ENCODE measurements at regions of chr2 and their contacts with region 1.

Region 1: DNA sequence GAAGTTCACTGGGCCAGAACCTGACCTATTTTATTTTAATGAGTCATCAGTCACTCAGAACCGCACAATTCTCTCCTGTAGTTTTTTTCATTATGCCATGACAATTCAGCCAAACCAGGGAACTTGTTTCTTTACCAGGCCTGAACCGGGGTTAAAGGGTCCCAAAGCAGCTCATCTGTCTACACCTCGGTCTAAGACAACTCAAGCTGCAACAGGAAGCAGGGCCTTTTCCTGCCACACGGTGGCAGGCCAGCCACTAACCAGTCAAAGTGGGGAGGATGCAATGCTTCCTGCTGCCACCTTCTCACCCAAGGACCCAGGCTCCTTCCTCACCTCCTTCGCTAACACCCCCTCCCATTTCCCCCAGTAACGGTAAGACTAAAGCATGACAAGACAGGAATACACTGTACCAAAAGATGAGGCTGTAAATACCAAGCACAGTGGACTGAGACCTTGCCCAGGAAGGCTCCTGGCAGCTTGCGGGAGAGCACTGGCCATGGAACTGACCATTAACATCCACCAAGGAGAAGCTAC is 56.7 kb upstream of the ACKR3 start:
- DNase-seq: peak in 1 of 2 donors; percentile 84
- H3K4me3 ChIP-seq: no peak overlapping the region
- H3K27ac ChIP-seq: no peak overlapping the region
- H3K4me1 ChIP-seq: no peaks in the 10 kb centered on the region
- H3K27me3 ChIP-seq: no peaks in the 10 kb centered on the region
- CTCF ChIP-seq: peak; percentile 71 to 85 (median 76)

Region 2: GRCh38 chr2:236631281-236631855 is 118.4 kb after region 1 on chr2:
- intact Hi-C with region 1: loop called (anchors 10 kb)
- DNase-seq: peak in 1 of 2 donors; percentile 60
- H3K4me3 ChIP-seq: no peak overlapping the region
- H3K27ac ChIP-seq: no peak overlapping the region
- H3K4me1 ChIP-seq: peaks cover 0 to 5% of the 10 kb centered on the region in 2 donors
- H3K27me3 ChIP-seq: no peaks in the 10 kb centered on the region
- CTCF ChIP-seq: no peak

Region 3: DNA sequence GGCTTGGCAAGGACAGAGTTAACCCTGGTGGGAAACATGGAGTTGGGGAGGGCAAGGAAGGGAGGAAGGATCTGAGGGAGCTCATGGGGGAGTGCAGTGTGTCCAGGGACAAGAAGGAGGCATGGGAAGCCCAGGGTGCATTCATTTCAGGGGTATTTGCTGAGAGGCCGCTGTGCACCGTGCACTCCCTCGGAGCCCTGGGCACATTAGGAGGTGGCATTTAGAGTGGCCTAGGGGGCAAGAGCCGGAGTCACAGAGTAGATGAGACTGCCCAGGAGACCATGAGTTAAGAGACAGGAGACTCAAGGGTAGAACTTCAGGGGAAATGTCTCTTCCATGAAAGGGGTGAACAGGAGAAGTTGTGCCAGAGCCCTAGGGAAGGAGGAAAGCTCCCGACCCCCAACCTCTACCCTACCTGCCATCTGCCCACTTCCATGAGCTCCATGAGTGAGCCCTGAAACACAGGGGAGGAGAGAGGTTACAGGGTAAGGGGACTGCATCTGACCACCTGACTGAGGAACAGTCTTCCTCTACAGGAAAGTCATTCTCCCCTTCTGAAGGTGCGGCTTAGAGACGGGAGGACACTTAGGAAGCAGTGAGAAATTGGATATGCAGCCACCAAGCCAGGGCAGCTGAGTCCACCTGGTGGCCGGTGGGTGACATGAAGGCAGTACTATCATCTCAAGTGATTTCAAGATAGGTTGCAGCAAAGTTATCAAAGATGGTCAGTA is 514.2 kb after region 1 on chr2:
- intact Hi-C with region 1: loop called (anchors 1 kb)
- DNase-seq: peak; percentile 38 to 83
- H3K4me3 ChIP-seq: no peak overlapping the region
- H3K27ac ChIP-seq: no peak overlapping the region
- H3K4me1 ChIP-seq: no peaks in the 10 kb centered on the region
- H3K27me3 ChIP-seq: no peaks in the 10 kb centered on the region
- CTCF ChIP-seq: peak; percentile 71 to 86 (median 80)

Region 4: DNA sequence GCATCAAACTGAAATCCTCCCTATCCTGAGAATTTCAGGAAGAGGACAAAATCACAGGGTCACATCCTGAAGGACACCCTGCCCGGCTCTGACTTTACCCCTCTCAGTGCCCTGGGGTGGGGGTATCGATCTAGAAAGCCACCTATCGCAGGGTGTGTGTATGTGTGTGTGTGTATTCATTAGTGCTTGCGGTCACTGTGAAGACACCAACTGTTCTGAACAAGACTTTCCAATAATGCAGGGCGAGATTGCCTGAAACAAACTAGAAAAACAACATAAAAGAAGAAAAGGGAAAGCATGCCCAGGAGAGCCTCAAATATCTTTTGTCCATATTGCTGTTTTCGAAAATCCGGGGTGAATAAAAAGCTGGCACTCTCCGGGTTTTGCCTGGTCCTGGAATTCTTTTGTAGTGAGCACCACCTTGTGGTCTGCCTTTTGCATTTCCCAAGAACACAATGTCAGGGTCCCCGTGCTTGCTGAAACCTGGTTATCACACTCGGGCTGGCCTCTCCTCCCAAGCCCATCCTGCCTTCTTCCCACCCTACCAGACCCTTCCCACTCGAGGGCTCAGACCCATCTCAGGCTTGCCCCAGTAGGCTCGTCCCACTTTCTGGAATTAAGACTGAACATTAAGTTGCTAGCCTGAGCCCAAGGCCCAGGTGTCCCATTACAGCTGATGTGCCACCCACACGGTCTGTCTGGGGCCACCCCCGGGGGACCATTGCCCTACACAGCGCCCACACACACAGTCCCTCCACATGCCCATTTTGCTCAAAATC is 547.8 kb after region 1 on chr2:
- intact Hi-C with region 1: loop called (anchors 2 kb)
- DNase-seq: no peak
- H3K4me3 ChIP-seq: peak overlapping the region in 1 of 2 donors; percentile 31
- H3K27ac ChIP-seq: no peak overlapping the region
- H3K4me1 ChIP-seq: peaks cover 0 to 15% of the 10 kb centered on the region in 2 donors
- H3K27me3 ChIP-seq: no peaks in the 10 kb centered on the region
- CTCF ChIP-seq: peak; percentile 61 to 74 (median 71)